GM13976 (cell line): ENCODE measurements at regions of chr19 and their contacts with region 1.

Region 1: DNA sequence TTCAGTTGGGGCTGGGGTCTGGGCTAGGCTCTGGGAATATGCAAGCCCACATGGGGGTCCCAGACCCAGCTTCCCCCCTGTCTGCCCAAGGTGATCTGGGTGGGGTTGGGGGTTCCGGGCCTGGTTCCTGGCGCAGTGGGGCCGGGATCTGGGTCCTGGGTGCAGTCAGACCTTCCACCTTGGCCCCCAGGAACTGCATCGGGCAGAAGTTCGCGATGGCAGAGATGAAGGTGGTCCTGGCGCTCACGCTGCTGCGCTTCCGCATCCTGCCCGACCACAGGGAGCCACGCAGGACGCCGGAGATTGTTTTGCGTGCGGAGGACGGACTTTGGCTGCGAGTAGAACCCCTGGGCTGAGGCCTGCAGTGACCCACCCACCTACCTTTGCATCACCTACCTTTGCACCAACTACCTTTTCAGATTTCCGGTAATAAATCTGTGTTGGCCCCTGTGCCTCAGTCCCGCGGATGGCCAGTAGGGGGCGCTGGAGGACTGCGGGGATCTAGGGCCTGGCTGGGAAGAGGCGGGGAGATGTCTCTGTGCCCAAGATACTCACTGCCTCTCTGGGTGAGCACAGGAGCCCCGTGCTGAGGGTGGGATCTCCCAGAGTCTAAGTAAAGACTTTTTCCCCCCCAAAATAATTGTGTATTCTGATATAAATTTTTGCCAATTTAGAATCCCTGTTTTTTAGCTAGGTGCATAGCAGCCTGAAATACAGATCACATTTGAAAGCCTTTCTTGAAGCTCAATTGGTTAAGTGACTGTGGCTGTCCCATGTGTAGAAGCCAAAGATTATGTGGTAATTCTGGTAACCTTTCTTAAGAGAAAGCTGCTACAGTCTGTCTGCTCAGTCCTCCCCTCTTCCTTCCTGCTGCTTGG is 11.5 kb upstream of the CYP4F3 start:
- DNase-seq: peak; percentile 90
- CTCF ChIP-seq: peak; percentile 94

Region 2: DNA sequence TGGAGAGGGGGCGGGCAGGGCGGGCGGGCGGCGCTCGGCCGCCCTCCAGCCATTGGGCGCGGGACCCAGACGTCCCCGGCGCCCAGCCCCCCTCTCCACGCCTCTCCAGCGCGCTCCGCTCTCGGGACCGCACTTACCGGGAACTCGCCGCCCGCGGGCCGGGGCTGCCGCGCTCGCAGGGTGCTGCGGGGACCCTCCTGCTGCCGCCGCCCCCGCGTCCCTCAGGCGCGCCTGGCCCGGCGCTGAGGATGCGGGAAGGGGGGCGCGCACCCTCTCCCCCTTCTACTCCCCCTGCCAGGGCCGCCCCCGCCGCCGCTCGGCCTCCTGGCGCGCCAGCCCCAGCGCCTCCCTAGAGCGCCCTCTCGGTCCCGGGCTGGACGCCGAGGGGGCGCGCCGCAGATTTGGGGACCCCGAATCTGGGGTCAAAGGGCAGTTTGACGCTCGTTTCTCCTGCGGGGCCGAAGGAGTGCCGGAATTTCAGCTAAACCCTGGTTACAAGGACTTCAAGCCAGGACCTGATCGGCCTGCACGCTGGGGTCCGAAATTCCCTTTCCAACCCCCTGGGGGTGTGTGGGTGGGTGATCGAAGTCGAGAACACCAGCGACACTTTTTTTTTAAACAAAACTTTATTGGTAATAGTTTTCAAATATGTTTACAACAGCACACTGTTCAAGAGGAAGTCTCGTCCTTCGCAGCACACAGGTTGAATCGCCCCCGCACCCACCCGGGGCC is 1538.0 kb before region 1 on chr19:
- in situ Hi-C with region 1: no loop called
- DNase-seq: peak; percentile 94
- CTCF ChIP-seq: peak; percentile 22

Region 3: GRCh38 chr19:15540435-15540834 is 88.8 kb before region 1 on chr19:
- in situ Hi-C with region 1: no loop called
- DNase-seq: no peak
- CTCF ChIP-seq: no peak

Region 4: GRCh38 chr19:15790096-15790495 is 160.9 kb after region 1 on chr19:
- in situ Hi-C with region 1: no loop called
- DNase-seq: no peak
- CTCF ChIP-seq: no peak

Region 5: GRCh38 chr19:15869109-15869555 is 239.9 kb after region 1 on chr19:
- in situ Hi-C with region 1: no loop called
- DNase-seq: peak; percentile 55
- CTCF ChIP-seq: peak; percentile 36

Region 6: DNA sequence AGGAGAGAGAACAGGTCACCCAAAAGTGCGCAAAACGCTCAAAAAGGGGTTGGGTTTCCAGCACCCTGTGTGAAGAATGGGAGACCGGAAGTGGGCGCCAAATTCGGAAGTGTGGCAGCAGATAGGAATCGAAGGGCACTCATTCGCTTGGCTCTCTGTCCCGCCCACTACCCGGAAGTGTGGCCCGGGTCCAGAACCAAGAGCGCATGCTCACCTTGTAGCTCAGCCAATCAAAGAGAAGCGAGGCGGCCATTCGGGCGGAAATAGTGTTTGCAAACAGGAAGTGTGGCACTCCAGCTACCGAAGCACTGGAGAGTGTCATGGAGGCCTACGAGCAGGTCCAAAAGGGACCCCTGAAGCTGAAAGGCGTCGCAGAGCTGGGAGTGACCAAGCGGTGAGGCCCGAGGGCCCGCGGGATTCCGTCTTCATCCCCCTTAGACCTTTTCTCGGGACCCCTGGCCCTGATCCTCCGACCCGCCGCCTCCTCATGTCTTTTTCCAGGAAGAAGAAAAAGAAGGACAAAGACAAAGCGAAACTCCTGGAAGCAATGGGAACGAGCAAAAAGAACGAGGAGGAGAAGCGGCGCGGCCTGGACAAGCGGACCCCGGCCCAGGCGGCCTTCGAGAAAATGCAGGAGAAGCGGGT is 556.0 kb after region 1 on chr19 and contains the start of gene FAM32A:
- in situ Hi-C with region 1: loop called (anchors 25 kb)
- DNase-seq: peak; percentile 98
- CTCF ChIP-seq: no peak